ENCODE measurements at regions of chr17 and their contacts with region 1.

Region 1: DNA sequence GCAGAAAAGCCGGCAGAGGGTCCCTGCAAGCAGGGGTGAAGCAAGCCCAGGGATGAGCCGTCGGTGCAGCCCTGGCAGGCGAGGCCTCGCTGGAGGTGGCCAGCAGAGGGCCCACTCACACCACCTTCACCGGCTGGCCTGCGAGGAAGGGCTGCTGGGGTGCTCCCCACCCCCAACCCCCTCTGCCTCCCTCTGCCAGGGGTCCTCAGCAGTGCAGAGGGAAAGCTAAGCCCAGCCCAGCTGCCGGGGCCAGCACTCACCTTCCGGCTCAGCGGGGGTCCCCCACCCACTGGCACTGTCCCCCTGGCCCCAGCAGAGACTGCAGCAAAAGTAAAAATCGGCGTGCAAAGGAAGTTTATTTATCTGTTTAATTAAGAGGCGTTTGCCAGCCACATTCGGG is 113.4 kb downstream of the ENGASE start:
- DNase-seq: no peak
- ATAC-seq: peak; percentile 64 to 70 (median 67)
- H3K4me3 ChIP-seq: no peak overlapping the region
- H3K27ac ChIP-seq: no peak overlapping the region
- H3K4me1 ChIP-seq: peaks cover 6% of the 10 kb centered on the region
- H3K27me3 ChIP-seq: peaks cover 2 to 90% (median 25%) of the 10 kb centered on the region in 3 donors
- CTCF ChIP-seq: peak; percentile 65

Region 2: GRCh38 chr17:79126139-79126538 is 61.9 kb before region 1 on chr17:
- intact Hi-C with region 1: loop called in 1 of 2 experiments (anchors 10 kb)
- DNase-seq: no peak
- ATAC-seq: peak; percentile 59 to 67 (median 67)
- H3K4me3 ChIP-seq: no peak overlapping the region
- H3K27ac ChIP-seq: no peak overlapping the region
- H3K4me1 ChIP-seq: no peaks in the 10 kb centered on the region
- H3K27me3 ChIP-seq: peaks cover 0 to 82% (median 23%) of the 10 kb centered on the region in 3 donors
- CTCF ChIP-seq: peak; percentile 38

Region 3: DNA sequence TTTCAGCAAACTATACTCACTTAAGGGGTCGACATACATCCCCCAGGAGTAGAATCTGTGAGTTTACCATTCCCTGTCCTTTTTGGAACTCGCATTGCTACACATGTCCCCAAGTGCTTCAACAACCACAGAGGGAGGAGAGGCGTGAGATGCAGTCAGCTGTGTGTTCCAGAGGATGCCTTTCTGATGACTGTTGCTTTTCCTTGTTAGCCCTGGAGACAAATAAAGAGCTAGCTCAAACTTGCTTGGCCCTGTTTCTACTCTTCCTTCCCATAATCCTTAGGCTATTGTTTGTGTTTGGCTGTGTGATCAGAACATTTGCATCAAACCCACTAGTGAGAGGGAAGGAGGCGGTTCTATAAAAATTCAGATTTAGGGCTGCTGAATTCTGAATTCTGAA is 150.6 kb after region 1 on chr17:
- intact Hi-C with region 1: no loop called
- DNase-seq: no peak
- ATAC-seq: no peak
- H3K4me3 ChIP-seq: no peak overlapping the region
- H3K27ac ChIP-seq: no peak overlapping the region
- H3K4me1 ChIP-seq: no peaks in the 10 kb centered on the region
- H3K27me3 ChIP-seq: peaks cover 0 to 47% (median 5%) of the 10 kb centered on the region in 3 donors
- CTCF ChIP-seq: no peak

Measured in psoas muscle (tissue), 8 donors.